ENCODE measurements at regions of chr2 and their contacts with region 1.

Region 1: DNA sequence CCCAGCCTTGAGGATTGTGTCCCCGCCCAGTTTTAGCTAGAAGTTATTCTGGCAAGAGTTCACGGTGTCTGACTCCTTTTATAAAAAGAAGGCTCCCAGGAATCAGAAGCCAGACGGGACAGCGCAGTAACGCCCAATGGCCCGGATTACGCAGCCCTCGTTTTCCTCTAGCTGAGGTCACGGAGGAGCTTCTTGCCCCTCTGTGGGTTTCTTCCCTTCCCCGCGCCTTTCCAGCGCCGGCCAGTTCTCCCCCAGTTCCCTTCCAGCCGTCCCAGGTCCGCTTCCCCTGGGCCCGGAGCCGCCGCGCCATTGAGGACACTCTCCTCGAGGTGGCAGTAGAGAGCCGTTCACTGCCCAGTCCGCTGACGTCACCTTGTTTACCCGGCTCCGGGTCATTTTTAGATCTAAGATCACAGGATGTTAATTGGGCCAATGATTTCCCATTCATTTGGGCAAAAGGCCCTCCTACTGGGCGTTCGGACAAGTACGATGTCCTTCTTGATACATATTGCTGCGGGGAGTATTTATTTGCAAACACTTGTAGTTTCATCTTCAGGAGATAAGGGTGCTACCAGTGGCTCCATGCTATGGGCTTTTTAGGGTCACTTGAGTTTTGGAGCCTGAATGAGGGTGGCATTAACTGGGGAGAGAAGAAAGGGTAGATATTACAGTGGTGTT is 81.5 kb upstream of the PPM1B start:
- DNase-seq: peak; percentile 75
- H3K4me3 ChIP-seq: peak overlapping the region; percentile 41
- H3K27ac ChIP-seq: no peak overlapping the region
- H3K4me1 ChIP-seq: no peaks in the 10 kb centered on the region
- H3K27me3 ChIP-seq: no peaks in the 10 kb centered on the region
- CTCF ChIP-seq: peak; percentile 96

Region 2: DNA sequence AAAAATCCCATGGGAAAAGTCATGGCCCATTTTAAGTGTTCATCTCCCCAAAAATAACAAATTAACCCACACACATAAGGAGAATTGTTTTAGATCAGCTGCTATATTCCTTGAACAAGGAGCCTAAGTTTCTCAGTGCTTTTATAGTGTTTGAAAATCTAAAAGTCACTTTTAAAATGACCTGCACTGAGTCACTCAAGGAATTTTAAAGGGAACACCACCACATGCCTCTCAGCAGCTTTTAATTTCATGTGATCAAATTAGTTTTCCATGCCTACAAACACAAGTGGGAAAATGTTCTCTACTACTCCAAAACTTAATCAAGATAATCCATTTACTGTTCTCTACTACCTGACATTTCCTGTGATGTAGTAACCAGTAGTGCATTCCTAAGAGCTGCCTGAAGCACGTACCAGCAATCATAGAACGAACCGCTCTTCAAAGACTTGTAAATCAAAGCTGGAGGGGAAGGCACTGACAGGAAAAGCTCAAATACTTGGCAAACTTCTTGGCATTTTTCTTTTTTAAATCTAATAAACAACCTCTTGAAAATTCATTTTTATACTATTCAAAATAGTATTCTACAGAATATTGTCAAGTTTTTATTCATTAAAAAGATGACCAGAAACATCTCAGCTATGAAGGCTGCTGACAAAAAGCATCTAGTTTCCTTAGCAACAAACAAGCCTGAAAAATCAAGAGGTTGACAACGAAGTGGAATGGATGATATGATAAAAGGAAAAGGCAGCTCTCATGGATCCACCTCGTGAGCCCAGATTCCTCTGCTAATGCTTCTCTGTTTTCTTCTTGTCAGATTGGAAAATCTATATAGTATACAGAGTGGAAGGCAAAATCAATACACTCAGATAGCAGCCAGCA is 128.5 kb before region 1 on chr2:
- CTCF ChIA-PET with region 1: no interaction called
- POLR2A ChIA-PET with region 1: no interaction called
- intact Hi-C with region 1: no loop called
- DNase-seq: no peak
- H3K4me3 ChIP-seq: no peak overlapping the region
- H3K27ac ChIP-seq: no peak overlapping the region
- H3K4me1 ChIP-seq: no peaks in the 10 kb centered on the region
- H3K27me3 ChIP-seq: no peaks in the 10 kb centered on the region
- CTCF ChIP-seq: no peak

Region 3: GRCh38 chr2:44120428-44120827 is 33.3 kb after region 1 on chr2:
- CTCF ChIA-PET with region 1: no interaction called
- POLR2A ChIA-PET with region 1: no interaction called
- intact Hi-C with region 1: no loop called
- DNase-seq: no peak
- H3K4me3 ChIP-seq: no peak overlapping the region
- H3K27ac ChIP-seq: no peak overlapping the region
- H3K4me1 ChIP-seq: no peaks in the 10 kb centered on the region
- H3K27me3 ChIP-seq: no peaks in the 10 kb centered on the region
- CTCF ChIP-seq: no peak

Region 4: GRCh38 chr2:44974064-44974715 is 887.0 kb after region 1 on chr2:
- CTCF ChIA-PET with region 1: no interaction called
- POLR2A ChIA-PET with region 1: no interaction called
- intact Hi-C with region 1: loop called (anchors 10 kb)
- DNase-seq: peak; percentile 81
- H3K4me3 ChIP-seq: no peak overlapping the region
- H3K27ac ChIP-seq: no peak overlapping the region
- H3K4me1 ChIP-seq: no peaks in the 10 kb centered on the region
- H3K27me3 ChIP-seq: no peaks in the 10 kb centered on the region
- CTCF ChIP-seq: peak; percentile 78